ENCODE measurements at regions of chr4 and their contacts with region 1.

Region 1: DNA sequence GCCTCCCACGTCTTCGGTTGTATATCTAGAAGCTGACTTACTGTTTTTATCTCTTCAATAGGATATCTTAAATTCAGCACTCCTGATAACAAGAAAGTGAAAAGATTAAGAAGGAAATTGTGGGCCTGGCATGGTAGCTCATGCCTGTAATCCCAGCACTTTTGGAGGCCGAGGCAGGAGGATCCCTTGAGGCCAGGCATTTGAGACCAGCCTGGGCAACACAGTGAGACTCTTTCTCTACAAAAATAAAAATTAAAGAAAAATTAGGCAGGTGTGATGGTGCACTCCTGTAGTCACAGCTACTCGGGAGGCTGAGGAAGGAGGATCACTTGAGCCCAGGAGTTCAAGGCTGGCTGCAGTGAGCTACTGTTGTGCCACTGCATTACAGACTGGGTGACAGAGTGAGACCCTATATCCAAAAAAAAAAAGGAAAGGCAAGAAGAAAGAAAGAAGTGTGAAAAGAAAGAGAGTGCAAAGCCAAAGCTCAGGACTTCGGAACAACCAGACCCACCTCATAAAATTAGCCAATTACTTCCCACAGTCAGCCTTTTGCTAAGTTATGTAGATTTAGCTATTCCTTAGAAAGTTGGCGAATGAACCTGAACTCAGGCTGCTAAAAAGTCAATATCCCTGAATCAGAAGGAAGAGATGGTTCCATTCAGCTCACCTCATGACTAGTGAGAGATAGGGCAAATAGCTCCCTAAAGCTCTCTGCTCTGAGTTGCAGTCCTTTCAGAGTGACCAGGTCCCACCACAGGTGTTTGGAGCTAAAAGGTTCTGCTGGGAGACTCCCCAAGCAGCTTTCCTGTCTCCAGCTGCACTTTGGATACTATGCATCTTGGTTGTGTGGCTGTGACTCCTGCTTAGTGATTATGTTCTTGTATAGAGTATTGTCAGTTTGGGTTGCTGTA is 9.2 kb downstream of the FGG start:
- DNase-seq: no peak
- H3K4me3 ChIP-seq: no peak overlapping the region
- H3K27ac ChIP-seq: no peak overlapping the region
- H3K4me1 ChIP-seq: peaks cover 14% of the 10 kb centered on the region
- H3K27me3 ChIP-seq: no peaks in the 10 kb centered on the region
- CTCF ChIP-seq: no peak

Region 2: GRCh38 chr4:154591890-154592289 is 11.4 kb before region 1 on chr4:
- CTCF ChIA-PET with region 1: interaction called, 12 read pairs
- dilution Hi-C with region 1: no loop called
- in situ Hi-C with region 1: no loop called
- intact Hi-C with region 1: no loop called
- DNase-seq: no peak
- H3K4me3 ChIP-seq: no peak overlapping the region
- H3K27ac ChIP-seq: no peak overlapping the region
- H3K4me1 ChIP-seq: peaks cover 4% of the 10 kb centered on the region
- H3K27me3 ChIP-seq: no peaks in the 10 kb centered on the region
- CTCF ChIP-seq: no peak

Region 3: GRCh38 chr4:154727540-154727939 is 124.3 kb after region 1 on chr4:
- CTCF ChIA-PET with region 1: no interaction called
- dilution Hi-C with region 1: no loop called
- in situ Hi-C with region 1: no loop called
- intact Hi-C with region 1: no loop called
- DNase-seq: no peak
- H3K4me3 ChIP-seq: no peak overlapping the region
- H3K27ac ChIP-seq: no peak overlapping the region
- H3K4me1 ChIP-seq: peaks cover 13% of the 10 kb centered on the region
- H3K27me3 ChIP-seq: no peaks in the 10 kb centered on the region
- CTCF ChIP-seq: no peak